SK-N-SH (cell line): ENCODE measurements at regions of chrX and their contacts with region 1.

Region 1: GRCh38 chrX:65528705-65529340 is 5.8 kb downstream of the LAS1L start:
- DNase-seq: peak; percentile 74
- H3K4me3 ChIP-seq: no peak overlapping the region
- H3K27ac ChIP-seq: no peak overlapping the region
- H3K4me1 ChIP-seq: peaks cover 0 to 8% of the 10 kb centered on the region in 2 experiments; a peak in 1 of 4 replicates
- H3K27me3 ChIP-seq: no peaks in the 10 kb centered on the region
- CTCF ChIP-seq: peak; percentile 98
- EP300 ChIP-seq: no peak
- RAD21 ChIP-seq: peak; percentile 69

Region 2: DNA sequence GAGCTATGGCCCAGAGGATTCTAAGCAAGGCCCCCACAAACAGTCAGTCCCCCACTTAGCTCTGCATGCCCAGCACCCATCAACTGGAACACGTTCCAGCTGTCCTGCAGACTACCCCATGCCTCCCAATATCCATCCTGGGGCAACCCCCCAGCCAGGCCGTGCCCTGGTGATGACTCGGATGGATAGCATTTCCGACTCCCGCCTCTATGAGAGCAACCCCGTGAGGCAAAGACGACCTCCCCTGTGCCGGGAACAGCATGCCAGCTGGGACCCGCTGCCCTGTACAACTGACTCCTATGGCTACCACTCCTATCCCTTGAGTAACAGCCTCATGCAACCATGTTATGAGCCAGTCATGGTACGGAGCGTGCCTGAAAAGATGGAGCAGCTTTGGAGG is 26.2 kb before region 1 on chrX:
- CTCF ChIA-PET with region 1: interaction called, 13 read pairs
- POLR2A ChIA-PET with region 1: no interaction called
- DNase-seq: no peak
- H3K4me3 ChIP-seq: no peak overlapping the region
- H3K27ac ChIP-seq: no peak overlapping the region
- H3K4me1 ChIP-seq: no peaks in the 10 kb centered on the region
- H3K27me3 ChIP-seq: no peaks in the 10 kb centered on the region
- CTCF ChIP-seq: no peak
- EP300 ChIP-seq: no peak
- RAD21 ChIP-seq: no peak

Region 3: DNA sequence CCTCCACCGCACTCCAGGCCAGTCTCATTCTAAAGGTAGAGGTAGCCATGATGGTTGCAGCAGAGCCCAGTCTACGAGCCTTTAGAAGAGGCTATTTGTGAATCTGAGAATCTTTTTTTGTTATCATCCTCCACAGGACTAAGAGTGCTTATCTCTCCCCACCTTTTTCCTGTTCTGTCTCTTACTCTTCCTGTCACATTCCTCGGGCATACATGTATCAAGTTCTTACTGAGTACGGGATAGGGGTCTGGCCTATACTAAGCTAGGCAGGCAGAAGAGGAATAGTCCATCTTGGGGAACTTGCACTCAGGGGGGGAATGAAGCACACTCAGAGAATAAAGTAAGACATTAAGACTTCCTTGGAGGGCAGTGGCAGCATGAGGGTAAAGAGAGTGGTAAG is 20.0 kb before region 1 on chrX:
- CTCF ChIA-PET with region 1: interaction called, 13 read pairs
- POLR2A ChIA-PET with region 1: no interaction called
- DNase-seq: no peak
- H3K4me3 ChIP-seq: no peak overlapping the region
- H3K27ac ChIP-seq: no peak overlapping the region
- H3K4me1 ChIP-seq: no peaks in the 10 kb centered on the region
- H3K27me3 ChIP-seq: no peaks in the 10 kb centered on the region
- CTCF ChIP-seq: no peak
- EP300 ChIP-seq: no peak
- RAD21 ChIP-seq: no peak

Region 4: GRCh38 chrX:65516756-65517155 is 12.1 kb before region 1 on chrX:
- CTCF ChIA-PET with region 1: interaction called, 21 read pairs
- POLR2A ChIA-PET with region 1: no interaction called
- DNase-seq: no peak
- H3K4me3 ChIP-seq: no peak overlapping the region
- H3K27ac ChIP-seq: no peak overlapping the region
- H3K4me1 ChIP-seq: no peaks in the 10 kb centered on the region
- H3K27me3 ChIP-seq: no peaks in the 10 kb centered on the region
- CTCF ChIP-seq: no peak
- EP300 ChIP-seq: no peak
- RAD21 ChIP-seq: no peak

Region 5: DNA sequence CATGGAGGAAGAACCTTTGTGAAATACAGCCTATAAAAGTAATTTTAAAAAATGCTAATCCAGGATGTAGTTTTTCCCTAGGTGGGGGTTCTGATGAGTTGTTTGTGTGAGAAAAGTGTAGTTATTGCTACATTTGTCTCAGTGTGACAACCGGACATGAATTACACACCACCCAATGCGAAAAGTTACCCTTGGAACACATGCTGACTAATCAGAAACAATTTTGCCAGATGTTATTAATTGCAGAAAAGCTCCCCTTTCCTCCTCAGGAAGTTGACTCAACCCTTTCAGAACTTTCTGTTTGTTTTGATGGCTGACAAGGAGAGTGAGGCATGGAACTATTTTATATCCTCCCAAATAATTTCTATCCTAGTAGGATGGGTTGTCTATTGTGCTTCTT is 1148.2 kb after region 1 on chrX:
- CTCF ChIA-PET with region 1: no interaction called
- POLR2A ChIA-PET with region 1: no interaction called
- DNase-seq: no peak
- H3K4me3 ChIP-seq: peak overlapping the region in 1 of 2 experiments; percentile 44; a peak in 1 of 4 replicates
- H3K27ac ChIP-seq: peak overlapping the region; percentile 41 to 97; a peak in 3 of 4 replicates
- H3K4me1 ChIP-seq: no peaks in the 10 kb centered on the region; a peak in 1 of 4 replicates
- H3K27me3 ChIP-seq: no peaks in the 10 kb centered on the region
- CTCF ChIP-seq: no peak
- EP300 ChIP-seq: peak in 1 of 2 experiments; percentile 86; a peak in 2 of 4 replicates
- RAD21 ChIP-seq: no peak